H1 (cell line): ENCODE measurements at regions of chr3 and their contacts with region 1.

Region 1: DNA sequence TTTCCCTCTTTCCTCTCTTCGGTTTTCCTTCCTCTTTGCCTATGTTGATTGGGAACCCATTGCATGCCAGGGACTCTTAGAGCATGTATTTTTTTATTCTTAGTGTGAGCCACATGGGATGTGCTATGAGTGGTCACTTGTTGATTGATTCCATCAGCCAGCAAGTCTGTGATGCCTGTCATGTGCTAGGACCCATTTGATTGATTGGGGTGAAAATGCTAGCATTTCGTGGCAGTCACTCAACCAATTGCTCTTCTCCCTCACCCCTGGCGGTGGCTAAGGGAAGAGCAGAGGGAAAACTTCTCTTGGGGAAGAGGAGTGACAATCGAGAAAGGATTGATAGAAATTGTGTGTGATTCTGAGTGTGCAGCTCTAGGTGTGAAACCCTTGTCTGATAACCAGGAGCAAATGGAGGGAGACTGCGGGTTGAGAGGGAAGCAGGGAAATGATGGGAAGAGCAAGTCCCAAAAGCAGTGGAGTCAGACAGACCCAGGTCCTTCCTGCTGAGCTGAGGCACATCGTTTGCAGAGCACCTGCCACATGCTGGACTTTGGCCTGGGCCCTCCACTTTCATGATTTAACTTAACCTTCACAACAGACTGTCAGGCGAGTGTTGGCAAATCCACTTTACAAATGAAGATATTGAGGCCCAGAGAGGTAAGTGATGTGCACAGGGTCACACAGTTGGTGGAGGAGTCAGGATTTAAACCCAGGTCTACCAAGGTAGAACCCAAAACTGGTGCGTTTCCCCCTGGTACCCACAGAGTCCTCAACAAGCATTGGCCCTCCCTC is 40.0 kb downstream of the SLC6A11 start:
- DNase-seq: peak in 1 of 2 experiments; percentile 52
- H3K4me3 ChIP-seq: no peak overlapping the region
- H3K27ac ChIP-seq: no peak overlapping the region
- H3K4me1 ChIP-seq: no peaks in the 10 kb centered on the region
- H3K27me3 ChIP-seq: peaks cover 0 to 3% (median 0%) of the 10 kb centered on the region in 4 experiments; a peak in 1 of 7 replicates
- CTCF ChIP-seq: peak; percentile 43 to 76 (median 65); a peak in 3 of 4 replicates
- EP300 ChIP-seq: no peak
- POLR2A ChIP-seq: no peak
- RAD21 ChIP-seq: peak; percentile 29 to 35

Region 2: GRCh38 chr3:10286596-10287330 is 569.3 kb before region 1 on chr3:
- CTCF ChIA-PET with region 1: no interaction called
- POLR2A ChIA-PET with region 1: no interaction called
- DNase-seq: peak; percentile 57 to 75
- H3K4me3 ChIP-seq: no peak overlapping the region
- H3K27ac ChIP-seq: no peak overlapping the region
- H3K4me1 ChIP-seq: peaks cover 0 to 7% (median 4%) of the 10 kb centered on the region in 4 experiments; a peak in 6 of 7 replicates
- H3K27me3 ChIP-seq: no peaks in the 10 kb centered on the region
- CTCF ChIP-seq: peak in 2 of 3 experiments; percentile 40 to 53; a peak in 3 of 4 replicates
- EP300 ChIP-seq: no peak
- POLR2A ChIP-seq: no peak
- RAD21 ChIP-seq: peak; percentile 60 to 63

Region 3: DNA sequence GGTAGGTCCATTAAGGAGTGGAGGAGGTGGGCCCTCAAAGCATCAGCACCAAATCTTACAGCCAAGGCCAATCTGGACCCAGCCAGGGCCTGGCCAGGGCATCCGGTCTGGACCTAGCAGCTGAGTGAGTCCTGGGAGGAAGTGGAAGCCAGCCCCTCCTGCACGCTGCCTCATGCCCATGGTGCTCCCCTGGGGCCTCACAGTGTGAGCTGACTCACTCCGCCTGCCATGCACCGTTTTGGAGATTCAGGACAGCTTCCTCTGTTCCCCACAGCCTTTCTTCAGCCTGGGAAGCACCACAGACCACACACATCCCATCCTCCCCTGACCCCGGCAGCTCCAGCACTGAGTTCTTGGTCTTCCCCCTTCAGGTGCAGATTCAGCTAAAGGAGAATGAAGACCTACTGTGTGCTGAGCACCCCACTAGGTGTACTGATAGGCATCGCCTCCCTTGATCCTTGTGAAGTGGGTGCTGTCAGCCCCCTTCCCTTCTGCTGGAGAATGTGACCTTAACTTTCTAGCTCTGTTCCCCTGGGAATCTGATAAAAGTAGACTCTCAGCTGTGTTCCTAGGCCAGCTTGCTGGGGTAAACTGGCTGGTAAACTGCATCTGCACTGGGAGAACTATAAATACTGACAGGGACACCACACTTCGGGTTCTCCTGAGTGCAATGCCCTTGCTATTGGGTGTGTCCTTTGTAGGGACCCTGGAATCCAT is 498.3 kb before region 1 on chr3:
- CTCF ChIA-PET with region 1: no interaction called
- POLR2A ChIA-PET with region 1: no interaction called
- DNase-seq: no peak
- H3K4me3 ChIP-seq: no peak overlapping the region
- H3K27ac ChIP-seq: no peak overlapping the region
- H3K4me1 ChIP-seq: no peaks in the 10 kb centered on the region; a peak in 1 of 7 replicates
- H3K27me3 ChIP-seq: no peaks in the 10 kb centered on the region; a peak in 1 of 7 replicates
- CTCF ChIP-seq: no peak
- EP300 ChIP-seq: no peak
- POLR2A ChIP-seq: no peak
- RAD21 ChIP-seq: no peak

Region 4: DNA sequence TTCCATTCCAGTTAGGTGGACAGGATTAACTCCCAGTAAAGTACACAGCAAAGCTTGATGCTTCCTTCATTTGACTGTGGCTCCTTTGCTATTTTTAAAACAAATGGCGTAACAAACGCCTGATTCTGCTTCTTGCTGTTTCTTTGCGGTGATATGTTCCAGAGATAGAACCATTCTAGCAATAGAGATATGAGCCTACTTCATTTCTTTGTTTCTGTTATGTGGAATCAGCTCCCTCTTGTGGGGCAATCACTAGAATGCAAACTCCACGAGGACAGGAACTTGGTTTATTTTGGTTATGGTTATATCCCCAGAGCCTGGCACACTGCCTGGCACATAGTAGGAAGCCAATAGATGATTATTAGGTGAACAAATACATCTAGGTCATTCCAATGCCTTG is 162.6 kb before region 1 on chr3:
- CTCF ChIA-PET with region 1: no interaction called
- POLR2A ChIA-PET with region 1: no interaction called
- DNase-seq: no peak
- H3K4me3 ChIP-seq: no peak overlapping the region
- H3K27ac ChIP-seq: no peak overlapping the region
- H3K4me1 ChIP-seq: no peaks in the 10 kb centered on the region
- H3K27me3 ChIP-seq: peaks cover 0 to 1% (median 0%) of the 10 kb centered on the region in 4 experiments; a peak in 2 of 7 replicates
- CTCF ChIP-seq: peak in 2 of 3 experiments; percentile 17 to 34; a peak in 2 of 4 replicates
- EP300 ChIP-seq: no peak
- POLR2A ChIP-seq: no peak
- RAD21 ChIP-seq: peak; percentile 56 to 60

Region 5: GRCh38 chr3:10835406-10835805 is 20.7 kb before region 1 on chr3:
- CTCF ChIA-PET with region 1: interaction called, 61 read pairs
- POLR2A ChIA-PET with region 1: no interaction called
- DNase-seq: peak in 1 of 2 experiments; percentile 49
- H3K4me3 ChIP-seq: no peak overlapping the region
- H3K27ac ChIP-seq: no peak overlapping the region
- H3K4me1 ChIP-seq: peaks cover 0 to 2% (median 0%) of the 10 kb centered on the region in 4 experiments; a peak in 1 of 7 replicates
- H3K27me3 ChIP-seq: no peaks in the 10 kb centered on the region; a peak in 1 of 7 replicates
- CTCF ChIP-seq: peak; percentile 56 to 68 (median 59)
- EP300 ChIP-seq: no peak
- POLR2A ChIP-seq: no peak
- RAD21 ChIP-seq: peak; percentile 48 to 65

Region 6: GRCh38 chr3:10845839-10846656 is 10.0 kb before region 1 on chr3:
- CTCF ChIA-PET with region 1: interaction called, 61 read pairs
- POLR2A ChIA-PET with region 1: interaction called, 3 read pairs
- DNase-seq: no peak
- H3K4me3 ChIP-seq: no peak overlapping the region
- H3K27ac ChIP-seq: no peak overlapping the region
- H3K4me1 ChIP-seq: no peaks in the 10 kb centered on the region
- H3K27me3 ChIP-seq: peaks cover 0 to 2% (median 0%) of the 10 kb centered on the region in 4 experiments; a peak in 1 of 7 replicates
- CTCF ChIP-seq: no peak
- EP300 ChIP-seq: no peak
- POLR2A ChIP-seq: no peak
- RAD21 ChIP-seq: no peak

Region 7: DNA sequence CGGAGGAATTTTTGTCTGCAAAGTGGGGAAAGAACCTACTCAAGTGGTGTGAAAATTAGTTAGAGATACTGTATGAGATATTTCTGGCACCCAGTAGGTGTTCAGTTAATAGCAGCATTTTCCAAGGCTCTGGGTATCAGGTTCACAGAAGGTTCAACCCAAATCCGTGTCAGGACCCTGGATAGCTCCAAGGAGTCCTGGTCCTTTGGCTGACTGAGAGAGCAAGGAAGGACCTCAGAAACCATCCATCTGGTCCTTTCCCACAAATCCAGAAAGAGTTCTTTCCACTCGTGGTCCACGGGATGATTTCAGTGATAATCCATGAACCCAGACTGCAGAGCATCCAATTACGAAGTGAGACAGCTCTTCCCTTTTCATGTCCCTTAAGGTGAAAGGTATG is 11.3 kb after region 1 on chr3:
- CTCF ChIA-PET with region 1: interaction called, 21 read pairs
- POLR2A ChIA-PET with region 1: no interaction called
- DNase-seq: peak in 1 of 2 experiments; percentile 65
- H3K4me3 ChIP-seq: no peak overlapping the region
- H3K27ac ChIP-seq: no peak overlapping the region
- H3K4me1 ChIP-seq: no peaks in the 10 kb centered on the region
- H3K27me3 ChIP-seq: peaks cover 24 to 48% (median 37%) of the 10 kb centered on the region in 4 experiments
- CTCF ChIP-seq: no peak
- EP300 ChIP-seq: no peak
- POLR2A ChIP-seq: no peak
- RAD21 ChIP-seq: no peak

Region 8: DNA sequence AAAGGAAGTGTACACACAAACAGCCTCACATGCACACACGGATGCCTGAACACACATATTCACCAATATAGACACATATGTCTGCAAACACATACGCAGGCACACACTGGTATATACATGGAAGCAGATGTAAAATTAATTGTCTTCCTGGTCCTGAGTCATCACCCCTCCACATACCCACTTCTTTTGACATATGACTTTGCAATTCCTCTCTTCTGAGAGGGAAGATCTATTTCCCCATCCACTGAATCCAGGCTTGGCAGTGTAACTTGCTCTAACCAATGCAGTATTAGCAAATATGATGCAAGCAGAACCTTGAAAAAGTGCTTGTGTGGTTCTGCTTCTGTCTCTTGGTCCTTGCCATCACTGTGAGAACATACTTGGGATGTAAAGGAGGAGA is 221.4 kb after region 1 on chr3:
- CTCF ChIA-PET with region 1: no interaction called
- POLR2A ChIA-PET with region 1: no interaction called
- DNase-seq: no peak
- H3K4me3 ChIP-seq: no peak overlapping the region
- H3K27ac ChIP-seq: no peak overlapping the region
- H3K4me1 ChIP-seq: peaks cover 0 to 3% (median 0%) of the 10 kb centered on the region in 4 experiments; a peak in 1 of 7 replicates
- H3K27me3 ChIP-seq: no peaks in the 10 kb centered on the region
- CTCF ChIP-seq: no peak
- EP300 ChIP-seq: no peak
- POLR2A ChIP-seq: no peak
- RAD21 ChIP-seq: no peak